IMR-90 (cell line): ENCODE measurements at regions of chr4 and their contacts with region 1.

Region 1: GRCh38 chr4:33837043-33837838 is 2407.1 kb downstream of the ARAP2 start:
- DNase-seq: peak; percentile 80
- ATAC-seq: peak; percentile 82
- H3K4me3 ChIP-seq: no peak overlapping the region
- H3K27ac ChIP-seq: no peak overlapping the region
- H3K4me1 ChIP-seq: peaks cover 5% of the 10 kb centered on the region
- H3K27me3 ChIP-seq: no peaks in the 10 kb centered on the region
- CTCF ChIP-seq: no peak
- POLR2A ChIP-seq: no peak
- RAD21 ChIP-seq: no peak

Region 2: DNA sequence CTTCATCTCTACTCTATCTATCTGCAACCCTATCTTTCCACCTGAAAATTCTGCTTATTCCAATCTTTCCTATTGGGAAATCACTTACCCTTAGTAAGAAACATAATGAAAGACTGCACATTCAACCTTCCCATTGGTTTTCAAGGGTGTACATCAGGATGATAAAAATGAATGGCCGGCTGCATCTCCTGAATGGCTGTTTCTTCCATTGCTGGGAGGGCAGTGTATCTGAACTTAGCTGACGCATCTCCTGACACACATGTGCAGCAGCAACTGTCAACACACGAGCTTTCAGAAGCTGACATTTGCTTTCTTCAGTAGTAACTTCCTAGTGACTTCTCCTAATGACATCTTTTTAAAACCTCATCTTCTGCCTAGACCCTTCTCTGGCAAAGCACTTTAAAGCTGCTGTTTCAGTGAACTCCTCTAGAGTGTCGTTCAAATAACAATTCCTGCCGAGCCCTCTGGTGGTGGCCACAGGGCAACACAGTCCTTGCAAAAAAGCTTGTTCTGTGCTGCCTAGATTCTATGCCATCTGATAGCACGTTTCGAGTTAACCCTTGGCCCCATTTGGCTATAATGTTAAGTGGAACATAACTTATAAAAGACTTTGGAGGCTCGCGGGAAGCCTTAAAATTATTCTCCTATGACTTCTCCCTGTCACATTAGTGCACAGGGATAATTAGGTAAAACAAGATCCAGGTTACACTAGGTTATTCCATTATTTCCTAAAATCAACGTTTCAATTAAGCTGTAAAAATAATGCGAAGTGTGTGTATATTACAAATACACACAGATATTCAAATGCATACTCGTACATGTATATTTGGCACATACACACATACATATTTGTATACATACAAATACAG is 776.3 kb before region 1 on chr4:
- CTCF ChIA-PET with region 1: no interaction called
- POLR2A ChIA-PET with region 1: no interaction called
- dilution Hi-C with region 1: no loop called
- in situ Hi-C with region 1: no loop called
- intact Hi-C with region 1: no loop called
- DNase-seq: peak; percentile 28
- ATAC-seq: peak; percentile 75
- H3K4me3 ChIP-seq: no peak overlapping the region
- H3K27ac ChIP-seq: no peak overlapping the region
- H3K4me1 ChIP-seq: no peaks in the 10 kb centered on the region
- H3K27me3 ChIP-seq: no peaks in the 10 kb centered on the region
- CTCF ChIP-seq: peak; percentile 69
- POLR2A ChIP-seq: no peak
- RAD21 ChIP-seq: peak; percentile 33

Region 3: GRCh38 chr4:33537527-33537926 is 299.7 kb before region 1 on chr4:
- CTCF ChIA-PET with region 1: no interaction called
- POLR2A ChIA-PET with region 1: no interaction called
- dilution Hi-C with region 1: no loop called
- in situ Hi-C with region 1: no loop called
- intact Hi-C with region 1: no loop called
- DNase-seq: no peak
- ATAC-seq: no peak
- H3K4me3 ChIP-seq: no peak overlapping the region
- H3K27ac ChIP-seq: no peak overlapping the region
- H3K4me1 ChIP-seq: no peaks in the 10 kb centered on the region
- H3K27me3 ChIP-seq: no peaks in the 10 kb centered on the region
- CTCF ChIP-seq: no peak
- POLR2A ChIP-seq: no peak
- RAD21 ChIP-seq: no peak

Region 4: GRCh38 chr4:33941854-33942253 is 104.6 kb after region 1 on chr4:
- CTCF ChIA-PET with region 1: no interaction called
- POLR2A ChIA-PET with region 1: no interaction called
- dilution Hi-C with region 1: no loop called
- in situ Hi-C with region 1: no loop called
- intact Hi-C with region 1: no loop called
- DNase-seq: no peak
- ATAC-seq: no peak
- H3K4me3 ChIP-seq: no peak overlapping the region
- H3K27ac ChIP-seq: no peak overlapping the region
- H3K4me1 ChIP-seq: no peaks in the 10 kb centered on the region
- H3K27me3 ChIP-seq: no peaks in the 10 kb centered on the region
- CTCF ChIP-seq: no peak
- POLR2A ChIP-seq: no peak
- RAD21 ChIP-seq: no peak

Region 5: GRCh38 chr4:34181311-34181808 is 344.1 kb after region 1 on chr4:
- CTCF ChIA-PET with region 1: no interaction called
- POLR2A ChIA-PET with region 1: no interaction called
- dilution Hi-C with region 1: no loop called
- in situ Hi-C with region 1: no loop called
- intact Hi-C with region 1: loop called (anchors 10 kb)
- DNase-seq: peak; percentile 91
- ATAC-seq: peak; percentile 87
- H3K4me3 ChIP-seq: no peak overlapping the region
- H3K27ac ChIP-seq: peak overlapping the region; percentile 91
- H3K4me1 ChIP-seq: peaks cover 7% of the 10 kb centered on the region
- H3K27me3 ChIP-seq: no peaks in the 10 kb centered on the region
- CTCF ChIP-seq: no peak
- POLR2A ChIP-seq: no peak
- RAD21 ChIP-seq: no peak